GM10248 (cell line): ENCODE measurements at regions of chr19 and their contacts with region 1.

Region 1: GRCh38 chr19:15091901-15092753 is 10.1 kb downstream of the OR1I1 start:
- DNase-seq: peak; percentile 55
- CTCF ChIP-seq: peak; percentile 58

Region 2: DNA sequence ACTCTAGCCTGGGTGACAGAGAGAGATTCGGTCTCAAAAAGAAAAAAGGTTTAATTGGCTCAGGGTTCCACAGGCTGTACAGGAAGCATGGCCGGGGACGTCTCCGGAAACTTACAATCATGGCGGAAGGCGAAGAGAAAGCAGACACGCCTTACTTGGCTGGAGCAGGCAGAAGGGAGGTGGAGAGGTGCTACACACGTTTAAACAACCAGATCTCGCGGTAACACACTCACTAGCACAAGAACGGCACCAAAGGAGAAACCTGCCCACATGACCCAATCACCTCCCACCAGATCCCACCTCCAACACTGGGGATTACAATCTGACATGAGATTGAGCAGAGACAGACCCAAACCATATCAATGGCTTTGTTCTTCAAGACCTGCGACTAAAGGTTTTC is 30.1 kb before region 1 on chr19:
- CTCF ChIA-PET with region 1: no interaction called
- POLR2A ChIA-PET with region 1: no interaction called
- DNase-seq: no peak
- CTCF ChIP-seq: no peak

Region 3: DNA sequence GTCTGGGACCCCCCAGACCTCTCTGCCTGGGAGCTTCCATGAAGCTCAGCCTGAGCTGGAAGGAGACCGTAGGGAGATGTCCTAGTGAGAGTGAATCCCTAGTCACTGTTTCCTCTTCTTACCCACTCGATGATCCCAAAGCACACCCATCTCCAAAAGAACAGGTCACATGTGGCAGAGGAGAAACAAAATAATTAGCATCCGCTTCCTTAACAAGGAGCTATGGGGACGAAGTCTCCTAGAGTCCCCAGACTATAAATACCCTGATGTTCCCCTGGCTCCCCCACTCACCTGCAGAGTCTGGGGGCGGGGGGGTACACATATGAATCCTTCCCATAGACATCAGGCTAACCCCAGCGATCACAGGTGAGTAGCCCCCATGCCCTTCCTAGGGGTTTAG is 10.2 kb before region 1 on chr19 and contains the start of gene OR1I1:
- CTCF ChIA-PET with region 1: interaction called, 17 read pairs
- POLR2A ChIA-PET with region 1: no interaction called
- DNase-seq: no peak
- CTCF ChIP-seq: no peak

Region 4: DNA sequence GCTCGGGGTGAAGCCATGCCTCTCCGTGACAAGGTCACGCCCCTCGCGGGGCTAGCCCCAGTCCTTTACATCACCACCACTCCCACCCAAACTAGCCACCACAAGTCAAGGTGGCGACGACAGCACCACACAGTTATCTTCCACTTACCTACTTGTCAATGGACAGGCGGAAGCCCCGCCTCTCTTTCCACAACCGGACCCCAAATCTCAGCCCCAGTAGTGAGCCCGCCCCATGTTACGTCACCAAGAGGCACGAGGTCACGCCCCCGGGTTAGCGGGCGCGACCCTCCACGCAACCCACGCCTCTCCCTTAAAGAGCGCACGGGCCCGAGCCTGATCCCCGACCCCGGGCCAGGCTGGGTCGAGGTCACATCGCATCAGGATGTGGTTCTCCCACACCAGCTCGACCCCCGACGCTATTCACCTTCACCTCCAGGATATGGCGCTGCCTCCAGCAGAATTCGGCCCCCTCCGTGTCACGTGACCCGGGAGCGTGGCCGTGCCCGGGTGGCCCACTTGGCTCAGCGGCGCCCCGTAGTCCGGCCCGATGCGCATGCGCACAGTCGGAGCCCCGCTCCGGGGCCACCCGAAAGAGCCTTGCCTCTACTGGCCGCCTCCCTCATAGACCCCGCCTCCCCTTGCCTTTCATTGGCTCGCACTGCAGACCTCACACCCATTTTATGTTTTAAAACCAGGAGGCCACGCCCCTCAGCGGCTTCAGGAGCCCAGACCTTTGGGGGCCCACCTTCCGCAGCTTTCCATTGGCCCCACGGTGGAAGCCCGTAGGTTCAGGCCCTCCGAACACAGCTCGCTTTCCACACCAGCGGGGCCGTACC is 33.3 kb after region 1 on chr19:
- CTCF ChIA-PET with region 1: interaction called, 13 read pairs
- POLR2A ChIA-PET with region 1: no interaction called
- DNase-seq: peak; percentile 99
- CTCF ChIP-seq: no peak

Region 5: GRCh38 chr19:15154002-15154612 is 62.0 kb after region 1 on chr19:
- CTCF ChIA-PET with region 1: interaction called, 47 read pairs
- POLR2A ChIA-PET with region 1: no interaction called
- DNase-seq: no peak
- CTCF ChIP-seq: peak; percentile 40

Region 6: DNA sequence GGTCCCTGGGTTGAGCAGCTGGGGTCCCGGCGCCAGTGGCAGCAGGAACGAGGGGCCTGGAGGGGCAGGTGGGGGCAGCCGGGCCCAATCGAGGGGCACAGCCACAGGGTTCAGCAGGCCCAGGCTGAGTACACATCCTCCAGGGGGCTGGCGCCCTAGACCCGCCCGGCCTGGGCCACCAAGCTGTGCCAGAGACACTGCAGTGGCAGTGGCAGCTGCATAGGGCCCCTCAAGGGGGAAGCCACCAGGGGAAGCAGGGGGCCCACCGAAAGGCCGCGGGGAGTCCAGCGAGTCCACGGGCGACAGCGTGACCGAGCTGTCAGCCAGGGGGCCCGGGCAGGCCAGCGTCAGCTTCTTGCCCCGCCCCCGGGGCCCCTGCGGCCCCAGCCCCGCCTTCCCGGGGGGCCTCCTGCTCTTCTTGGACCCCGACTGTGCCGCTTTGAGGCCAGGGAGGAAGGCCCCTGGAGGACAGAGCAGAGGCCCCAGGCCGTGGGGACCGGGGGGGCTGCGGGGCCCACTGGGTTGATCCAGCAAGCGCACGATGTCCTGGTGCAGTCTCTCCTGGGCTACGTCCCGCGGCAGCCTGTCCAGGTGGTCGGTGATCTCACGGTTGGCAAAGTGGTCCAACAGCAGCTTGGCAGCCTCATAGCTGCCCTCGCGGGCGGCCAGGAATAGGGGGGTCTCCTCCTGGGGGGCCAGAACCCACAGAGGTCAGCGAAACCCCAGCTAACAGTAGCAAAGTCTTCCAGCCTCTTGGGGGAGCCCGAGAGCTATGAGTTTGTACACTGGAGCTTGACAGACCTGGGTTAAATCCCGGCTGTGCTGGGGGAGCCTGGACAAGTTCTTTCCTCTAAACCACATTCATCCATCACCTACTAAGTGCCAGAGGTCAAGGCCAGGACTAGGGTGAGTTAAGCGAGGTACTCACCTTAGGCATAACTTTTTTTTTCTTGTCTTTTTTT is 69.2 kb after region 1 on chr19:
- CTCF ChIA-PET with region 1: interaction called, 10 read pairs
- POLR2A ChIA-PET with region 1: no interaction called
- DNase-seq: peak; percentile 70
- CTCF ChIP-seq: peak; percentile 68

Region 7: GRCh38 chr19:15185188-15185587 is 93.1 kb after region 1 on chr19:
- CTCF ChIA-PET with region 1: no interaction called
- POLR2A ChIA-PET with region 1: no interaction called
- DNase-seq: no peak
- CTCF ChIP-seq: no peak